Heart left ventricle (tissue), 16 donors: ENCODE measurements at regions of chr6 and their contacts with region 1.

Region 1: DNA sequence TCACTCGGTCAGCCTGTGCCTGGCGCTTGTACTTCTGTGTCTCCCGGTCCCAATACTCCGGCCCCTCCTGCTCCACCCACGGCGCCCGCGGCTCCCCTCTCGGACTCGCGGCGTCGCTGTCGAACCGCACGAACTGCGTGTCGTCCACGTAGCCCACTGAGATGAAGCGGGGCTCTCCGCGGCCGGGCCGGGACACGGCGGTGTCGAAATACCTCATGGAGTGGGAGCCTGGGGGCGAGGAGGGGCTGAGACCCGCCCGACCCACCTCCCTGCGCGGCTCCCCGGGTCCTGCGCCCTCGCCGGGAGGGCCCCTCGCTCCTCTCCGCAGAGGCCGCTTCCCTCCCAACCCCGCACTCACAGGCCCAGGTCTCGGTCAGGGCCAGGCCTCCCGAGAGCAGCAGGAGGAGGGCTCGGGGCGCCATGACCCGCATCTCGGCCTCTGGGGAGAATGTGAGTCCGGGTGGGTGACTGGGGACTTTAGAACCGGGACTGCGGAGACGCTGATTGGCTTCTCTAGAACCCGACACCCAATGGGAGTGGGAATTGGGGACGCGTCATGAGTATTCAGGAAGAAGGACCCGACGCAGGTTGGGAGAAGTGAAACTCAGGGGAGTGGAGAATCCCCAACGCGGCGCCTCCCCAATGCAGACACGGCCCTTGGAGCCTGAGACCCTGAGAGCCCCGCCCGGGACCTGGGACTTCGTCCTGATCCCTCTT is at the start of gene HLA-C:
- DNase-seq: peak; percentile 91 to 96 (median 94)
- ATAC-seq: peak; percentile 97 to 99 (median 99)
- H3K4me3 ChIP-seq: peak within 1 kb of the TSS; percentile 47 to 99 (median 74)
- H3K27ac ChIP-seq: peak within 1 kb of the TSS; percentile 70 to 100 (median 92)
- H3K4me1 ChIP-seq: peaks cover 0 to 24% (median 2%) of the 10 kb centered on the region in 12 donors
- H3K27me3 ChIP-seq: no peaks in the 10 kb centered on the region
- CTCF ChIP-seq: peak in 2 of 12 donors; percentile 11 to 23
- POLR2A ChIP-seq: peak in 1 of 2 donors; percentile 98
- total RNA-seq, gene HLA-C: 160 to 1,096 (median 318) TPM

Region 2: DNA sequence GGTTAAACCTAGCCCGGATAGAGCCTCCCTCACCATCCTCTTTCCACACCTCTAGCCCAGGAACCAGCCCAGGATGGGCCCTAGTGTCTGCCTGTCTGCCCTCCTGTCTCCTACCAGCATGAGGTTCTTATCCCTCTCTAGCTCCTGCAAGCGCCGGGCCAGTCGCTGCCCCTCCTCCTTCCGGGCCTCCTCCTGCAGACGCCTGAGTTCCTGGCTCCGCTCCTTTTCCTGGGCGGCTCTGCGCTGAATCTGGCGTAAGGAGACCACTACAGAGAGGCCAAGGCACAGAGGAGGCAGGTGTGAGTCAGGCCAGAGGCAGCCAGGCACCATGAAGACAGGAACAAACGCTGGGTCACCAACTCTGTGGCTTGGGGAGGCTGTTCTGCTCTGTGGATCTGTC is 128.7 kb before region 1 on chr6:
- intact Hi-C with region 1: loop called in 1 of 10 experiments (anchors 10 kb)
- DNase-seq: peak; percentile 50 to 83 (median 77)
- ATAC-seq: peak; percentile 52 to 90 (median 87)
- H3K4me3 ChIP-seq: no peak overlapping the region
- H3K27ac ChIP-seq: peak overlapping the region in 10 of 12 donors; percentile 38 to 82 (median 52)
- H3K4me1 ChIP-seq: peaks cover 0 to 32% (median 16%) of the 10 kb centered on the region in 12 donors
- H3K27me3 ChIP-seq: no peaks in the 10 kb centered on the region
- CTCF ChIP-seq: no peak
- POLR2A ChIP-seq: peak in 1 of 2 donors; percentile 36

Region 3: GRCh38 chr6:31203345-31203979 is 68.3 kb before region 1 on chr6:
- intact Hi-C with region 1: loop called in 6 of 10 experiments (anchors 2 to 5 kb)
- DNase-seq: no peak
- ATAC-seq: peak in 3 of 4 donors; percentile 30 to 51 (median 42)
- H3K4me3 ChIP-seq: peak overlapping the region in 11 of 12 donors; percentile 0 to 60 (median 47)
- H3K27ac ChIP-seq: peak overlapping the region in 11 of 12 donors; percentile 69 to 96 (median 81)
- H3K4me1 ChIP-seq: peaks cover 0 to 62% (median 12%) of the 10 kb centered on the region in 12 donors
- H3K27me3 ChIP-seq: no peaks in the 10 kb centered on the region
- CTCF ChIP-seq: no peak
- POLR2A ChIP-seq: no peak

Region 4: GRCh38 chr6:31351401-31352309 is 79.9 kb after region 1 on chr6:
- intact Hi-C with region 1: loop called in 8 of 10 experiments (anchors 2 to 5 kb)
- DNase-seq: no peak
- ATAC-seq: no peak
- H3K4me3 ChIP-seq: no peak overlapping the region
- H3K27ac ChIP-seq: no peak overlapping the region
- H3K4me1 ChIP-seq: peaks cover 0 to 26% (median 2%) of the 10 kb centered on the region in 12 donors
- H3K27me3 ChIP-seq: no peaks in the 10 kb centered on the region
- CTCF ChIP-seq: no peak
- POLR2A ChIP-seq: no peak

Region 5: GRCh38 chr6:31366693-31367470 is 95.1 kb after region 1 on chr6:
- intact Hi-C with region 1: loop called in 2 of 10 experiments (anchors 5 kb)
- DNase-seq: peak; percentile 84 to 93 (median 86)
- ATAC-seq: peak; percentile 95 to 100 (median 100)
- H3K4me3 ChIP-seq: peak overlapping the region in 9 of 12 donors; percentile 34 to 52 (median 47)
- H3K27ac ChIP-seq: no peak overlapping the region
- H3K4me1 ChIP-seq: peaks cover 0 to 8% (median 4%) of the 10 kb centered on the region in 12 donors
- H3K27me3 ChIP-seq: peaks cover 0 to 42% (median 0%) of the 10 kb centered on the region in 9 donors
- CTCF ChIP-seq: peak; percentile 80 to 97 (median 92)
- POLR2A ChIP-seq: no peak

Region 6: GRCh38 chr6:33112148-33112547 is 1840.3 kb after region 1 on chr6:
- intact Hi-C with region 1: no loop called
- DNase-seq: peak in 1 of 5 donors; percentile 29
- ATAC-seq: peak; percentile 82 to 96 (median 94)
- H3K4me3 ChIP-seq: no peak overlapping the region
- H3K27ac ChIP-seq: peak overlapping the region in 1 of 12 donors; percentile 21
- H3K4me1 ChIP-seq: peaks cover 0 to 31% (median 0%) of the 10 kb centered on the region in 12 donors
- H3K27me3 ChIP-seq: peaks cover 6 to 55% (median 15%) of the 10 kb centered on the region in 9 donors
- CTCF ChIP-seq: no peak
- POLR2A ChIP-seq: no peak